ENCODE measurements at regions of chr19 and their contacts with region 1.

Region 1: DNA sequence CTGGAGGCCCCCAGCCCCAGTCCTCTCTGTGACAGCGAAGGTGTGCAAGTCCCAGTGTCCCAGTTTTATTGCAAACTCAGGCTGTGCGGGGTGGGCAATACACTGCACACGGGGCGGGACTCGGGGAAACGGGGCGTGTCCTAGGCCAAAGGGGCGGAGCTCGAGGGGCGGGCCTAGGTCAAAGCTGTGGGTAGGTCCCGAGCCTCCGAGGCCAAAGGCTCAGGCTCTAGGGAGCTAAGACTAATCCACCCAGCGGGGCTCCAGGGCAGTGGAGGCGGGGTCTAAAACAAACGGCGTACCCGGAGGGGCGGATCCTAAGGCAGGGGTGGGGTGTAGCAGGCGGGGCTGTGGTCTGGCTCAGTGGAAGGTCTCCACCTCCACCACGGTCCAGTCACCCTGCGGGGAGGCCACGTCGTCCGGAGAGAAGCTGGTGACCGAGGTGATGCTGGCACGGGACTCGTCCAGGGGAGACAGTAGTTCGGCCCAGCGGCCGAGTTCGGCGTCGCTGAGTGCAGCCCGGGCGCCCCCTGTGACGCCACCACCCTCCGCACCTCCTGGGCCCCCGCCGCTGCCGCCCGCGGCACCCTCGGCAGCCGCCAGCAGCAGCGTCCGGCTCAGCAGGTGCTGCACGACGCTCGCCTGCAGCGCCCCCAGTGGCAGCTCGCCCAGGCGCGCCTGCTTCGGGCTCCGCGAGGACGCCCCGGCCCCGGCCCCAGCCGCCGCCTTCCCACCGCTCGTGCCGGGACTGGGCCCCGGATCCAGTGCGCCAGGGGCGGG is 5.3 kb downstream of the PRR36 start:
- DNase-seq: peak; percentile 94 to 97
- H3K4me3 ChIP-seq: peak overlapping the region; percentile 27
- H3K4me1 ChIP-seq: peaks cover 32% of the 10 kb centered on the region
- H3K27me3 ChIP-seq: no peaks in the 10 kb centered on the region

Region 2: GRCh38 chr19:7919610-7920518 is 51.0 kb after region 1 on chr19 and contains the start of gene SNAPC2:
- in situ Hi-C with region 1: loop called (anchors 5 kb)
- DNase-seq: peak; percentile 87 to 99
- H3K4me3 ChIP-seq: peak within 1 kb of the TSS; percentile 60
- H3K4me1 ChIP-seq: peaks cover 22% of the 10 kb centered on the region
- H3K27me3 ChIP-seq: peaks cover 25% of the 10 kb centered on the region